ENCODE measurements at regions of chr9 and their contacts with region 1.

Region 1: GRCh38 chr9:16030513-16031185 is 477.8 kb downstream of the CCDC171 start:
- DNase-seq: peak; percentile 67
- H3K4me3 Mint-ChIP-seq: no peak overlapping the region
- H3K27ac Mint-ChIP-seq: peak overlapping the region; percentile 0
- H3K4me1 Mint-ChIP-seq: peaks cover 7% of the 10 kb centered on the region
- H3K27me3 Mint-ChIP-seq: peaks cover 2% of the 10 kb centered on the region

Region 2: GRCh38 chr9:16121601-16122286 is 91.1 kb after region 1 on chr9:
- intact Hi-C with region 1: loop called (anchors 10 kb)
- DNase-seq: no peak
- H3K4me3 Mint-ChIP-seq: no peak overlapping the region
- H3K27ac Mint-ChIP-seq: no peak overlapping the region
- H3K4me1 Mint-ChIP-seq: peaks cover 4% of the 10 kb centered on the region
- H3K27me3 Mint-ChIP-seq: no peaks in the 10 kb centered on the region

Region 3: DNA sequence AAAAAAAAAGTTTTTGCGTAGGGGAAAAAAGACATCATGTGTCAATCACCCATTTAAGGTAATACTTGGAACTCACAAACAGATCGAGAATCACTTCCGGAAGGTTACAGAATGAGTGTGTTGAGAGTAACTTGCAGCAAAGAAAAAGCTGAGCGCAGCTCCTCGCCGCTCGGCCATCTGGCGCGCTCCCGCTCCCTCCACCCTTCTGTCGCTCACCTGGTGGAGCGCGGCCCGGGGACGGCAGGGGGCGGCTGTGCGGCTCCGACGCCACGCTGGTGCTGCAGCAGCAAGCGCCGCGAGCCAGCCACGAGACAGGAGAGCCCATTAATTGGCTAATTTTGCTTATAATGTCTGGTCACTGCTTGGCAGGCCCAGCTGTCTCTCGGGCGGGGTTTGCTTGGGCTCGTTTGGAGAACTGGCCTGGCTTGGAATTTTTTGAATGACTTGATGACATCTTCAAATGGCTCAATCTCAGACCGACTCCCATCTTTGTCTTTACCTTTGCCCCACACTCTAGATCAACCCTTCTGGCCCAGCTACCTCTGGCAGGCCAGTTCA is 124.0 kb after region 1 on chr9:
- intact Hi-C with region 1: no loop called
- DNase-seq: peak; percentile 74
- H3K4me3 Mint-ChIP-seq: peak overlapping the region; percentile 59
- H3K27ac Mint-ChIP-seq: peak overlapping the region; percentile 38
- H3K4me1 Mint-ChIP-seq: peaks cover 6% of the 10 kb centered on the region
- H3K27me3 Mint-ChIP-seq: peaks cover 7% of the 10 kb centered on the region